Activated CD4-positive, alpha-beta T cell treated with anti-CD3 and anti-CD28 coated beads for 36 hours (primary cell): ENCODE measurements at regions of chr1 and their contacts with region 1.

Region 1: GRCh38 chr1:151619489-151620093 is 7.7 kb downstream of the SNX27 start:
- DNase-seq: no peak
- ATAC-seq: peak; percentile 58
- H3K4me3 Mint-ChIP-seq: no peak overlapping the region
- H3K27ac Mint-ChIP-seq: peak overlapping the region; percentile 12
- H3K4me1 Mint-ChIP-seq: peaks cover 56% of the 10 kb centered on the region
- H3K27me3 Mint-ChIP-seq: no peaks in the 10 kb centered on the region

Region 2: DNA sequence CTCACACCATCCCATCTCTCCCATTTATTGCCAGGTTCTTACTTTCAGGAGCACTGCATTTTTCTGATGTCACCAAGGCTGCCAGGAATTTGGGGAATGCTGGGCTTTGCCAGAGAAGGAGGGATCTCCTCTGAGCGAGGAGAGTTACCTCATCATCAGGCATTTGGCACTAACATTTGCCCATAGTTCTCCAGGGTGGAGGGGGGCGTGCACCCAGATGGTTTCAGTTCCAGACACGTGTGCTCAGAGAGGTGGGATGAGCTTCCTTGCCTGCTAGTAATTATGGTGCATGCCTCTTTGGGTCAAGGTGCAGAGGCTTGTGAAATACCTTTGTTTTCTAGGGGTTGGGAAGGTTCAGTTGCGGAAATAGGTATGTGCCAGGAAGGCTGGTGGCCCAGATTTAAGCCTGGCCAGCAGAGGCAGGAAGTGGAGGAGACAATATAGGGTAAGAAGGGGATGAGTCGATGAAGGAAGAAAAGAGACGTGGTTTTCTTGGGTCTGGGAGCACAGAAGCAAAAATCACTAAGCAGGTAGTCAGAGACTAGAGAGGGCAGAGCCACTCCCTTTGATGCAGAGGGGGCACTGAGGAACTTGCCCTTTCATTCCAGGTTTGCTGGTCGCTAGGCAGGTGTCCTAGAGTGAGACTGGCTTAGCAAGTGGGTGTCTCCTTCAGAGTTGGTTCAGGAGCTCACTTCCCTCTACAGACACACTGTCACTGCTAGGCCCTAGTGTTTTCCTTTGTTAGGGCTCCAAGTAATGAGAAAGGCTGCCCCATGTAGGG is 72.3 kb before region 1 on chr1:
- CTCF ChIA-PET with region 1: no interaction called
- POLR2A ChIA-PET with region 1: no interaction called
- intact Hi-C with region 1: no loop called
- DNase-seq: no peak
- ATAC-seq: no peak
- H3K4me3 Mint-ChIP-seq: no peak overlapping the region
- H3K27ac Mint-ChIP-seq: no peak overlapping the region
- H3K4me1 Mint-ChIP-seq: peaks cover 6% of the 10 kb centered on the region
- H3K27me3 Mint-ChIP-seq: no peaks in the 10 kb centered on the region

Region 3: GRCh38 chr1:151574545-151575529 is 44.8 kb before region 1 on chr1:
- CTCF ChIA-PET with region 1: no interaction called
- POLR2A ChIA-PET with region 1: no interaction called
- intact Hi-C with region 1: no loop called
- DNase-seq: peak; percentile 60
- ATAC-seq: peak; percentile 97
- H3K4me3 Mint-ChIP-seq: no peak overlapping the region
- H3K27ac Mint-ChIP-seq: peak overlapping the region; percentile 55
- H3K4me1 Mint-ChIP-seq: peaks cover 8% of the 10 kb centered on the region
- H3K27me3 Mint-ChIP-seq: no peaks in the 10 kb centered on the region

Region 4: GRCh38 chr1:151594143-151594625 is 25.4 kb before region 1 on chr1:
- CTCF ChIA-PET with region 1: interaction called, 11 read pairs
- POLR2A ChIA-PET with region 1: no interaction called
- intact Hi-C with region 1: no loop called
- DNase-seq: peak; percentile 94
- ATAC-seq: peak; percentile 100
- H3K4me3 Mint-ChIP-seq: peak overlapping the region; percentile 53
- H3K27ac Mint-ChIP-seq: peak overlapping the region; percentile 29
- H3K4me1 Mint-ChIP-seq: peaks cover 9% of the 10 kb centered on the region
- H3K27me3 Mint-ChIP-seq: peaks cover 5% of the 10 kb centered on the region

Region 5: DNA sequence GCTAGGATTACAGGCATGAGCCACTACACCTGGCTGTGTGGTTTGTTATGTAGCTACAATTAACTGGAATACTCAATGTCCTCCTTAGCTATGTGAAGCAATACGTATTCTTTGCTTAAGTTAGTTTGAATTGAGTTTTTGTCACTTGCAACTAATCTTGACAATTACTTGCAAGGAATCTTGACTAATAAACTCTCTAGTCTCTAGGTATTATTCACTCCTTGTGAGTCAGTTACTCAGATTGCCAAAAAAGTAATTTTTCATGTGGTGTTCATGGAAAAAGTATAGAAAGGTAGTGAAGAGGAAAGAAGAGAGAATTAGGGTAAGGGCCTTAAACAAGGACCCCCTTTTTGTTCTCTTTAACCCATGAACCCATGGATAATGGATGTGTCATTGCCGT is 15.3 kb before region 1 on chr1:
- CTCF ChIA-PET with region 1: no interaction called
- POLR2A ChIA-PET with region 1: no interaction called
- intact Hi-C with region 1: loop called in 1 of 2 experiments (anchors 2 kb)
- DNase-seq: no peak
- ATAC-seq: no peak
- H3K4me3 Mint-ChIP-seq: no peak overlapping the region
- H3K27ac Mint-ChIP-seq: no peak overlapping the region
- H3K4me1 Mint-ChIP-seq: peaks cover 6% of the 10 kb centered on the region
- H3K27me3 Mint-ChIP-seq: peaks cover 11% of the 10 kb centered on the region

Region 6: DNA sequence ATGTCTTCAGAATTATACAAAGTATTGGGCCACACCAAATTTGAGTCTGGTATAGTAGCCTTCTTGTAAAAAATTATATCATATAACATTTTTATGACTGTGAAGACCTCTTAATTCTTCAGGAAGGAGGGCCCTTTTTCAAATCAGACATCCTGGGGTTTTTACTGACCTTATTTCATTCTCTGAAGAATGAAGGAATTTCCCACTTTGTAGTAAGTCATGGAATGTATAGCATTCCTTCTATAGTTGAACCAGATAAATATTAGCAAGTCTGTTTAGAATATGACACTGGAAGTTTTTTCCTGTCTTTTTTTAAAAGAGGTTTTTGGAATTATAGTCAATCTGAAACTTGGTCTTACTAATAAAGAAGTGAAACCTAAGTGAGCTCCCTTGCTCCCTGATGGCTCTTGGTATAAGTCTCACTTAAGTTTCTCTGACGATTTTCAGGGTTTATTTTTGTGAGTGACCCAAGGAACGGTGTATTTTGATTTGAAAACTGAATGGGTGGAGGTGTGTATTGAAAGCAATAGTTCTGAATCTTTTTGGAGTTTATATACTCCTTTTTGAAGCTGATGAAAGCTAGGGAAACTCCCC is 16.0 kb after region 1 on chr1:
- CTCF ChIA-PET with region 1: interaction called, 3 read pairs
- POLR2A ChIA-PET with region 1: no interaction called
- intact Hi-C with region 1: loop called in 1 of 2 experiments (anchors 2 kb)
- DNase-seq: no peak
- ATAC-seq: no peak
- H3K4me3 Mint-ChIP-seq: no peak overlapping the region
- H3K27ac Mint-ChIP-seq: no peak overlapping the region
- H3K4me1 Mint-ChIP-seq: peaks cover 4% of the 10 kb centered on the region
- H3K27me3 Mint-ChIP-seq: no peaks in the 10 kb centered on the region